ENCODE measurements at regions of chr22 and their contacts with region 1.

Region 1: DNA sequence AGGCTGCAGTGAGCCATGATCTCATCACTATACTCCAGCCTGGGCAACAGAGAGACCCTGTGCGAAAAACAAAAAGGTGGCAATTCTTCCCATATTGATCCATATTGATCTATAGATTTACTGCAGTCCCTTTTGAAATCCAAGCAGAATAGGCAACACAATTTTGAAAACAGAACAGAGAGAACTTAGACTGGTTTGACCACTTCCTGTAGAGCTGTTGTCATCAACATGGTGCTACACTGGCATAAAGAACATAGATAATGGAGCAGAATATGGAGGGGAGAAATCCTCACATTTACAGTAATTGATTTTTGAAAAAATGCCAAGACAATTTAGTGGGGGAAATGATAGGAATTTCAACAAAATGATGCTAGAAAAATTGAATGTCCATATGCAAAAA is 34.1 kb downstream of the GRK3 start:
- DNase-seq: no peak
- H3K4me3 ChIP-seq: no peak overlapping the region
- H3K27ac ChIP-seq: no peak overlapping the region
- H3K4me1 ChIP-seq: no peaks in the 10 kb centered on the region
- H3K27me3 ChIP-seq: no peaks in the 10 kb centered on the region
- CTCF ChIP-seq: no peak
- POLR2A ChIP-seq: no peak

Region 2: DNA sequence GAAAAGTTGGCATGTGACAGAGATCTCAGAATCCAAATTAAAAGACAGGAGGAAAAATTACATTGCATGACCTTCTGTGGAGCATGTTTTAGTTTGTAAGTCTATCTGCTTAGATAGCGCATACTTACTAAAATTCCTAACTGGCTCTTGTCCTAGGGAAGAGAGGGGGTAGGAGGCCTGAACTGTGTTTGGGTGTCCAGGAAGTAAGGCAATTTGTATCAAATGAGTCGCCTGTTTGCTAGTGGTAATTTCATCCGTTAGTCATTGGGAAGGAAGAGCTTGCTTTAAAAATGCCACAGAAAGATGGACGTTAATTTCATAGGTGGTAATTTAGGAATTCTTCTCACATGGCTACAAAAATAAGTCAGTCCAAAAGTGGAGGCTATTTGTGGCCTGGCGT is 15.7 kb before region 1 on chr22:
- intact Hi-C with region 1: loop called (anchors 2 kb)
- DNase-seq: no peak
- H3K4me3 ChIP-seq: no peak overlapping the region
- H3K27ac ChIP-seq: no peak overlapping the region
- H3K4me1 ChIP-seq: no peaks in the 10 kb centered on the region
- H3K27me3 ChIP-seq: no peaks in the 10 kb centered on the region
- CTCF ChIP-seq: no peak
- POLR2A ChIP-seq: no peak

Region 3: GRCh38 chr22:25781801-25782200 is 183.2 kb after region 1 on chr22:
- intact Hi-C with region 1: no loop called
- DNase-seq: no peak
- H3K4me3 ChIP-seq: no peak overlapping the region
- H3K27ac ChIP-seq: no peak overlapping the region
- H3K4me1 ChIP-seq: no peaks in the 10 kb centered on the region
- H3K27me3 ChIP-seq: no peaks in the 10 kb centered on the region
- CTCF ChIP-seq: no peak
- POLR2A ChIP-seq: no peak